ENCODE measurements at regions of chr7 and their contacts with region 1.

Region 1: DNA sequence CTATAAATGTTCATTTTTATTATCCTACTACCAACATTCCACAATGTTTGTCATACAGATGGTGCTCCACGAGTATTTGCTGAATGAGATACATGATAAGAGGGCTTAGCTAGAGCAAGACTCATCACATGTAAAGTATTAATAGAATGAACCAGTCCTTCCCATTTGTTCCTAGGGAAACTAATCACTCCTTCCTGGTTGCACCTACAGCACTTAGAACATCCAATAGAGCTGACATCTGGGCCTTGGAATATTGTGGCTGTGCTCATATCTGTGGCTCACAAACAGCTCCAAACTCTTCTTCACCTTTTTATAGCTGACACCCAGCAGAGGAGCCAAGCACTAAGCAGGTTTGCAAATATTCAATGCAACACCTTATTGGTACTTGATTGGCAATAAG is 91.9 kb upstream of the C1GALT1 start:
- DNase-seq: no peak
- H3K4me3 ChIP-seq: no peak overlapping the region
- H3K27ac ChIP-seq: no peak overlapping the region
- H3K4me1 ChIP-seq: no peaks in the 10 kb centered on the region
- H3K27me3 ChIP-seq: no peaks in the 10 kb centered on the region
- CTCF ChIP-seq: no peak
- POLR2A ChIP-seq: no peak

Region 2: GRCh38 chr7:7048213-7048612 is 42.2 kb before region 1 on chr7:
- intact Hi-C with region 1: loop called (anchors 2 kb)
- DNase-seq: no peak
- H3K4me3 ChIP-seq: no peak overlapping the region
- H3K27ac ChIP-seq: no peak overlapping the region
- H3K4me1 ChIP-seq: no peaks in the 10 kb centered on the region
- H3K27me3 ChIP-seq: no peaks in the 10 kb centered on the region
- CTCF ChIP-seq: no peak
- POLR2A ChIP-seq: no peak